ENCODE measurements at regions of chr7 and their contacts with region 1.

Region 1: DNA sequence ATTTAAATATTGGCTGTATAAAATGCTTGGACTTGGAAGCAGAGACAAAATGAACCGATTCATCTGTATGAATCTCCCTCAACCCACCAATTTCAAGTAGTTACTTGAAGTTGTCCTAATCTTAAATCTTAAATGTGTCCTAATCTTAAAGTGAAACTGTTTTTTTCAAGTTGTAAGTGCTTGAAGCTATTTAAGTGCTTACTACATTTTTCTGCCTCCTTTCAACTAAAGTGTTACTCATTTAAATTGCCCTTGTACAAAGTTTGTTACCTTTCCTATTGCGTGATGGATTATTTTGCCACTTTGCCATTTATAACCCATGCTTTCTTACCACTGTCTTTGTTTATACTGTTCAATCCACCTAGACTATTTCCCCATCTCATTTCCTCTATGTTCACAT is 2.8 kb downstream of the BCAP29 start:
- DNase-seq: no peak
- H3K4me3 ChIP-seq: no peak overlapping the region
- H3K27me3 ChIP-seq: no peaks in the 10 kb centered on the region
- CTCF ChIP-seq: no peak

Region 2: DNA sequence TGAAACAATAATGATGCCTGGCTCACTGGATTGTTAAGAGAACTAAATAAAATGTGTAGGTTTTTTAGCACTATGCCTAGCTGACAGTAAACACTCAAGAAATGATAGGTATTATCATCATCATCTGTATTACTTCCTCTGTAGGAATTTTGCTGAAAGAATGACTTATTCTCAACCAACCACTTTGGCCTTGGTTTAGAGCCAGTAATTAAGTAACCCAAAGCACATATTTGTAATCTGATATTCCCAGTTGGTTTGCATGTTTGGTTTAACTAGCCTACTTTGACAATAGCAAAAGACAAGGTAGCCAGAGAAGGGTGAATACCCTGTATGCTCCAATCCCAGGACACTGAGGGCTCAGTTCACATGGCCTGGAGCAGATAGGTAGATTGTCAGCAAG is 31.6 kb after region 1 on chr7:
- CTCF ChIA-PET with region 1: no interaction called
- POLR2A ChIA-PET with region 1: interaction called, 16 read pairs
- DNase-seq: peak; percentile 58
- H3K4me3 ChIP-seq: no peak overlapping the region
- H3K27me3 ChIP-seq: no peaks in the 10 kb centered on the region
- CTCF ChIP-seq: no peak

Measured in BJ (cell line).